HEK293T (cell line): ENCODE measurements at regions of chr19 and their contacts with region 1.

Region 1: DNA sequence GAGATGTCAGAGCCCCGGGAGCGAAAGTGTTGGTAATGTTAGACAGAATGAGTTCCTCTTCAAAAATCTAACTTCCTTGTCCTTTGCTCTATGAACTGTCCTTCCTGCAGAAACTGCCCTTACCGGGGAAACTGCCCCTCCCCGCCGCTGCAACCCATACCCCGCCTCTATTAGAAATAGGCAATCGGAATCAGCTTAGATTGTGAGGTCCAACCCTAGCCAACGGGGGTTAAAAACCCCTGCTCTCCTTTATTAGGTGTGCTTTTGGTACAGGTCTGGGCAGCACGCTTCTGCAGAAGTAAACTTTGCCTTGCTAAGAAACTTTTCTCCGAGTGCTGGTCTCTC is 11.5 kb upstream of the CAPNS1 start:
- DNase-seq: no peak

Region 2: GRCh38 chr19:36081385-36081784 is 47.0 kb before region 1 on chr19:
- CTCF ChIA-PET with region 1: no interaction called
- POLR2A ChIA-PET with region 1: no interaction called
- DNase-seq: no peak

Region 3: DNA sequence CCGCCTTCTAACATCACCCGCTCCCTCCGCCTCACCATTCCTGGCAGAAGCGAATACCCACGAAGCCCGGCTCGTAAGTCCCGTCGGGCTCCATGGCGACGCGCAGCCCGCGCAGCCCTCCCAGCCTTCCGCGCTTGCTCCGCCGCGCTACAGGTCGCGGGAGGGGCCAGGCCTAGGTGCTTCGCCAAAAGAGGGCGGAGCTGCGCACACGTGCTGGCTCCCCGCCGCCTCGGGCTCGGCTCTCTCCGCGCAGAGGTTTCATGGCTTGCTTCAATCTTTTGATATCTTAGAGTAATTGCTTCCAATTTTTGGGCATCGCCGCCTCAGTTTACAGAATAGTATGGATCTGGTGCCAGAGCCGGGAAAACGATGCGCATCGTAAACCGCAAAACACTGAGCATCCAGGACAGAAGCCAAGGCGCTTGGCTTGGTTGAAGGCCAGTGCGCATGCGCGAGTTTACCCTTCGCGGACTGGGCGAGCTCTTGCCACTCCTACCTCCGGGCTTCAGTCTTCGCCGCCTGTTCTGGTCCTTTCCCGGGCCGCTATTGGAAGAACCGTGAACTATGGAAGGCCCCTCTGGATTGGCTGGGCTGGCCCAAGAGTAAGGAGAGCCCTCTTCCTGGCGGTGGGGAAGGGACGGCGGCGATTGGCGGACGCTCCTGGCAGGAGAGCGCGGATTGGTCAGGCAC is 13.5 kb before region 1 on chr19 and contains the start of gene POLR2I:
- CTCF ChIA-PET with region 1: interaction called, 3 read pairs
- POLR2A ChIA-PET with region 1: interaction called, 39 read pairs
- DNase-seq: peak; percentile 97

Region 4: GRCh38 chr19:36139473-36140303 is 11.3 kb after region 1 on chr19 and contains the start of gene CAPNS1:
- CTCF ChIA-PET with region 1: interaction called, 3 read pairs
- POLR2A ChIA-PET with region 1: interaction called, 23 read pairs
- DNase-seq: peak; percentile 97

Region 5: DNA sequence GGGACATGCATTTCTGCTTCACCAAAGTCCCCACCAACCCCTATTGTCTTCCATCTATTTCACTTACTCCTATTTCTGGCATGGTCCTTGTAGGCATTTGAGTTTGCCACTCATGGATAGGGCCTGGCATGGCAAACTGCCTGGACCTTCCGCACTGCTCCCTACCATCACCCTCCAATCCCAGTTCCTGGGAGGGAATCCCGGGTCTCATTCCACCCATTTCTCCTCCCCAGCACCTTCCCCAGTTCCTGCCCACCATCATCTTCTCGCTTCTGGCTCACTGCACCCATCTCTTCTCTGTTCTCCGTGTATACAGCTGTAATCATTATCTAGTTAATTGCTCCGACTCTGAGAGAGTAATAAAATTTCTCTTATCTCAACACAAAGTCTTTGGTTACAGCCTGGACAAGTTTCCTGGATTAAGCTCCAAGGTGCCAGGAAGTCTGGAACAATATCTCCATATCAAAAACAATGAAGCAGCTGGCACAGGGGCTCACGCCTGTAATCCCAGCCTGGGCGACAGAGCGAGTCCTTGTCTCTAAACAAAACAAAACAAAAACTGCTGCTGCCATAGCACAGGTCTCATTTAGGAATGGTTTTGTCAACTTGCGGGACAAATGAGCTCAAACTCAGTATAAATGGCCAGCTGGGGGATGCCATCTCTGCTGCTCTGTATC is 40.9 kb after region 1 on chr19:
- CTCF ChIA-PET with region 1: interaction called, 7 read pairs
- POLR2A ChIA-PET with region 1: interaction called, 36 read pairs
- DNase-seq: no peak